ENCODE measurements at regions of chr17 and their contacts with region 1.

Region 1: DNA sequence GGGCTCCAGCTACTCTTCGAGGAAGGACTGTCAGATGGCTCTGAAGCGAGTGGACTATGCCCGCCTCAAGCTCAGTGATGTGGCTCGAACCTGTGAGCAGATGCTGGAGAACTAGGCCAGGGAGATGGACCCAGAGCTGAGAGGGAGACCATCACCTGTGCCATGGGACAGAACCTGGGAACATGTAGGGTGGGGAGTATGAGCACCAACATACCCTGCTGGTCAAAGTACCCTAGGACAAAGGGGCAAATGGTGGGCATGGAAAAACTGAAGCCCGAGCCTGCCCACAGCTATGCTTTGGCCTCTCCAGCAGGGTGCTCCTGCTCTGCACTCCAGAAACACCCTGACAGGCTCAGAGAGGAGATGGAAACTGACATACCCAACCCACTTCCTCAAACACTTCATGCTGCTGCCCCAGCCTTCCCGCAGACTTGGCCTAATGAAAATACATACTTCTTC is 1.9 kb downstream of the MED11 start:
- DNase-seq: no peak
- H3K4me3 ChIP-seq: no peak overlapping the region
- H3K27ac ChIP-seq: peak overlapping the region in 2 of 4 donors; percentile 30 to 32
- H3K4me1 ChIP-seq: peaks cover 0 to 19% (median 13%) of the 10 kb centered on the region in 4 donors
- H3K27me3 ChIP-seq: no peaks in the 10 kb centered on the region
- CTCF ChIP-seq: peak in 2 of 5 experiments; percentile 12 to 29
- EP300 ChIP-seq: no peak
- POLR2A ChIP-seq: no peak

Region 2: GRCh38 chr17:5111402-5112204 is 378.5 kb after region 1 on chr17 and contains the start of gene ZNF232:
- in situ Hi-C with region 1: no loop called
- intact Hi-C with region 1: loop called (anchors 5 kb)
- DNase-seq: peak; percentile 97
- H3K4me3 ChIP-seq: peak within 1 kb of the TSS; percentile 51 to 89 (median 77)
- H3K27ac ChIP-seq: peak within 1 kb of the TSS; percentile 77 to 84 (median 84)
- H3K4me1 ChIP-seq: peaks cover 6 to 17% (median 9%) of the 10 kb centered on the region in 4 donors
- H3K27me3 ChIP-seq: peaks cover 24% of the 10 kb centered on the region
- CTCF ChIP-seq: no peak
- EP300 ChIP-seq: peak; percentile 64
- POLR2A ChIP-seq: peak; percentile 67
- total RNA-seq, gene ZNF232: 6.8 to 69.6 (median 27.2) TPM

Region 3: DNA sequence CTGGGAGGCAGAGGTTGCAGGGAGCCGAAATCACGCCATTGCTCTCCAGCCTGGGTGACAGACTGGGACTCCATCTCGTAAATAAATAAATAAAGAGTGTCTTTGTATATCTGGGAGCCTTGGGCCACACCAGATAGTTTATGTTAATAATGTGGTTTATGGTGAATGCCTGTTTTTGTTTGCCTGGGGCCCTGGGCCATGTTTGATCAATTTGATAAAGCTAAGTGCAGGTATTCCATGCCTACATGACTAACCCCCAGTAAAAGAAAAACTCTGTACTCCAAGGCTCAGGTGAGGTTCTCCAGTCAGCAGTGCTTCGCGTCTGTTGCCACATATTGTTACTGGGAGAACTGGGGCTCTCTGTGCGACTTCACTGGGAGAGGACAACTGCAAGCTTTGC is 486.4 kb after region 1 on chr17:
- in situ Hi-C with region 1: no loop called
- intact Hi-C with region 1: no loop called
- DNase-seq: no peak
- H3K4me3 ChIP-seq: no peak overlapping the region
- H3K27ac ChIP-seq: no peak overlapping the region
- H3K4me1 ChIP-seq: no peaks in the 10 kb centered on the region
- H3K27me3 ChIP-seq: no peaks in the 10 kb centered on the region
- CTCF ChIP-seq: no peak
- EP300 ChIP-seq: no peak
- POLR2A ChIP-seq: no peak